Endothelial cell of umbilical vein (primary cell): ENCODE measurements at regions of chr9 and their contacts with region 1.

Region 1: DNA sequence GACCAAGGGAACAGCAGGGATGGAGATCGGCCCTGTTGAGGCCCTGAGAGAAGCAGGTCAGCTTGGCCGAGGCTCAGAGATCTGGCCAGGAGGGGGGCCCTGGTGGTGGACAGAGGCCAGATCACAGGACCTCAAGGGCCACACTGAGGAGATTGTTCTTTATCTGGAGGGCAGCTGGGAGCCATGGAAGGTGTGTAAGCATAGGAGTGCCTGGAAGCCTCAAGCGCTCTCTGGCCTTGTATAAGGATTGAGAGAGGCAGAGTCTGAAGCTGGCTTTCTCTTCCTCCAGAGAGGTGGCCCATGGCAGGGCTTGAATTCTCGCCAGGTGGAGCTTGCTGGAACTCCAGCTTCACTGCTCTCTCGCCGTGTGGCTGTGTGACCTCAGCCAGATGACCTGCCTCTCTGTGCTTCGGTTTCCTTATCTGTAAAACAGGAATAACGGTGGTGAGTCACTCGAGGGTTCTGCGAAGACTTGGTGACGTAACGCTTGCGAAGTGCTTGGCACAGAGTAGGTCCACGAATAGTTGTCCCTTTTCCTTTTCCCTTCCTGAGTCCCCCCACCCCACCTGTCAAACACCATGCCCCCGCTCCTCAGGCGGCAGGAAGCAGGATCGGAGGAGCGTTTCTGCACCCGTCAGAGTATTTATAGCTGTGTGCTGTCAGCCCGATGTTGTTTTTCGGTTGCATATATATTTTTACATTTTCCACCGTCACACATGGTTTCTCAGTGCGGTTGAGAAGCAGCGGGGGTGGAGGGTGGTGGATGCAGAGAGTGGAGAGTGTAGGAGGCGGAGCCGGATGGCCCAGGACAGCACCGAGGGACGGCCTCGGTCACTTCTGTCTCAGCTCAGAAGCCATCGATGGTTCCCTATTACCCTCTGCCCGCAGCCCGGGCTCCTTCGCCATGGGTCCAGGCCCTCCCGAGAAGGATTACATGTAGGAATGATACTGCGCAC is 17.0 kb upstream of the CRB2 start:
- DNase-seq: peak; percentile 20
- H3K4me3 ChIP-seq: no peak overlapping the region
- H3K27ac ChIP-seq: no peak overlapping the region
- H3K4me1 ChIP-seq: no peaks in the 10 kb centered on the region
- H3K27me3 ChIP-seq: no peaks in the 10 kb centered on the region
- CTCF ChIP-seq: no peak
- POLR2A ChIP-seq: no peak

Region 2: GRCh38 chr9:123234853-123235252 is 104.1 kb before region 1 on chr9:
- CTCF ChIA-PET with region 1: no interaction called
- POLR2A ChIA-PET with region 1: no interaction called
- dilution Hi-C with region 1: no loop called
- intact Hi-C with region 1: no loop called
- DNase-seq: no peak
- H3K4me3 ChIP-seq: no peak overlapping the region
- H3K27ac ChIP-seq: no peak overlapping the region
- H3K4me1 ChIP-seq: no peaks in the 10 kb centered on the region
- H3K27me3 ChIP-seq: no peaks in the 10 kb centered on the region
- CTCF ChIP-seq: no peak
- POLR2A ChIP-seq: no peak

Region 3: GRCh38 chr9:123268240-123268949 is 70.6 kb before region 1 on chr9 and contains the start of gene STRBP:
- CTCF ChIA-PET with region 1: no interaction called
- POLR2A ChIA-PET with region 1: no interaction called
- dilution Hi-C with region 1: no loop called
- intact Hi-C with region 1: loop called (anchors 1 kb)
- DNase-seq: peak; percentile 84
- H3K4me3 ChIP-seq: peak within 1 kb of the TSS; percentile 57 to 95 (median 60)
- H3K27ac ChIP-seq: no peak within 1 kb of the TSS
- H3K4me1 ChIP-seq: peaks cover 2% of the 10 kb centered on the region
- H3K27me3 ChIP-seq: peaks cover 0 to 4% of the 10 kb centered on the region in 2 experiments
- CTCF ChIP-seq: no peak
- POLR2A ChIP-seq: no peak
- total RNA-seq, gene STRBP: 14.8 and 15.4 TPM in 2 replicates

Region 4: DNA sequence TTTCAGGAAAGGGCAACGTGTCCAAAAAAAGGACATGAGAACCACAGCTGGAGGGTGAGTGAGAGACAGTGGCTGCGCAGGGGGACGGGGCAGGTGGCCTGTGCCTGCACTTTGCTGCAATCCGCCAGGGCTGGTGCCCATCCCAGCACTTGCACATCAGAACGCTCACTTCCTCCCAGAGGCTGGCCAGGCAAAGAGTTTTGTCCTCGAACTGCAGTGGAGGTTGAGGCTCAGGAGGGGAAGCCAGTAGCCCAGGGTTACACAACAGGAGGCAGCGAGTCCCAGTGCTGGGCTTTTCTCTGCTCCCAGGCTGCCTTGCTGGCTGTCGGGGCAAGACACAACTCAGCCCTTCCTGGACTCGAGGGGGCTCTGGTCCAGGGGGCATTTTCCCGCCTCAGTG is 50.1 kb after region 1 on chr9:
- CTCF ChIA-PET with region 1: no interaction called
- POLR2A ChIA-PET with region 1: no interaction called
- dilution Hi-C with region 1: no loop called
- intact Hi-C with region 1: no loop called
- DNase-seq: no peak
- H3K4me3 ChIP-seq: no peak overlapping the region
- H3K27ac ChIP-seq: no peak overlapping the region
- H3K4me1 ChIP-seq: no peaks in the 10 kb centered on the region
- H3K27me3 ChIP-seq: no peaks in the 10 kb centered on the region
- CTCF ChIP-seq: no peak
- POLR2A ChIP-seq: no peak

Region 5: GRCh38 chr9:123589361-123590239 is 250.6 kb after region 1 on chr9:
- CTCF ChIA-PET with region 1: no interaction called
- POLR2A ChIA-PET with region 1: no interaction called
- dilution Hi-C with region 1: no loop called
- intact Hi-C with region 1: no loop called
- DNase-seq: no peak
- H3K4me3 ChIP-seq: no peak overlapping the region
- H3K27ac ChIP-seq: no peak overlapping the region
- H3K4me1 ChIP-seq: no peaks in the 10 kb centered on the region
- H3K27me3 ChIP-seq: no peaks in the 10 kb centered on the region
- CTCF ChIP-seq: no peak
- POLR2A ChIP-seq: no peak